PC-9 (cell line): ENCODE measurements at regions of chr3 and their contacts with region 1.

Region 1: GRCh38 chr3:105402287-105402801 is 35.6 kb downstream of the ALCAM start:
- DNase-seq: peak; percentile 93 to 98
- H3K4me3 ChIP-seq: peak overlapping the region; percentile 40; the same call in 1 of the 2 replicates
- H3K27ac ChIP-seq: peak overlapping the region; percentile 91
- H3K4me1 ChIP-seq: peaks cover 30% of the 10 kb centered on the region
- H3K27me3 ChIP-seq: no peaks in the 10 kb centered on the region
- CTCF ChIP-seq: no peak

Region 2: GRCh38 chr3:105274958-105275357 is 127.4 kb before region 1 on chr3:
- CTCF ChIA-PET with region 1: no interaction called
- POLR2A ChIA-PET with region 1: no interaction called
- intact Hi-C with region 1: loop called (anchors 1 kb)
- DNase-seq: peak; percentile 40 to 78
- H3K4me3 ChIP-seq: no peak overlapping the region
- H3K27ac ChIP-seq: peak overlapping the region; percentile 52
- H3K4me1 ChIP-seq: peaks cover 22% of the 10 kb centered on the region
- H3K27me3 ChIP-seq: no peaks in the 10 kb centered on the region
- CTCF ChIP-seq: no peak

Region 3: DNA sequence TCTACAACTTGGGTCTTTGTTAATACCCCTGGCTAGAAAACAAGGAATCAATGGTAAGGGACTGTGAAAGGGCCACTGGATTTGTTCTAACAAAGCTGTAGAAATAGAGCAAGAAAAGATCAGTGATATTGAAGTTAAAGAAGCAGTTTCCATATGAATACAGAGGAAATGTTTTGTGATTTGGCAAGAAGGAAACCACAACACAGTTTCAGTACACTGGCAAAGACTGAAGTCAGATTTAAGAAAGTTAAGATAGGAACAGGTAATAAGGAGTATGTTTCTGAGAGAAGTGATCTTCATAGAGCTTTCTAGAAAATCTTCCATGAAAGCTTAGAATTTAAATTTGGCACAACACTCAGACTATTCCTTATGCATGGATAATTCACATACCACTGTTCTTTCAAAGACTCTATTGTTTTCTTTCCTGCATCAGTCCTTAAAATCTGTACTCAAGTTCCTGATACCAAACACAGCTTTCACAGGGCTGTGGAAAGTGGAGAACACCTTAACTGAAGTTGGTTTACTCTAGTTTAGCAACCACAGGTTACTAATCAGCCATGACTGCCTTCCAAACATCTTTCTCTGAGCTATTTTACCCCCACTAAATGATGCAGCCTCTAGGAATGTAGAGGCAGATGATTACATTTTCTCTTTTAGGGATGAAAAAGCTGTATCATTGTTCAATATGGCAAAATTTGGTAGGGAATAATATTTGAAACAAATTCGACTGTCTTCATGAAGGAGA is 68.0 kb before region 1 on chr3:
- CTCF ChIA-PET with region 1: interaction called, 17 read pairs
- POLR2A ChIA-PET with region 1: no interaction called
- intact Hi-C with region 1: no loop called
- DNase-seq: no peak
- H3K4me3 ChIP-seq: no peak overlapping the region
- H3K27ac ChIP-seq: no peak overlapping the region
- H3K4me1 ChIP-seq: no peaks in the 10 kb centered on the region
- H3K27me3 ChIP-seq: no peaks in the 10 kb centered on the region
- CTCF ChIP-seq: no peak

Region 4: GRCh38 chr3:105431200-105431599 is 28.9 kb after region 1 on chr3:
- CTCF ChIA-PET with region 1: no interaction called
- POLR2A ChIA-PET with region 1: interaction called, 11 read pairs
- intact Hi-C with region 1: no loop called
- DNase-seq: no peak
- H3K4me3 ChIP-seq: no peak overlapping the region
- H3K27ac ChIP-seq: no peak overlapping the region
- H3K4me1 ChIP-seq: no peaks in the 10 kb centered on the region
- H3K27me3 ChIP-seq: no peaks in the 10 kb centered on the region
- CTCF ChIP-seq: no peak

Region 5: DNA sequence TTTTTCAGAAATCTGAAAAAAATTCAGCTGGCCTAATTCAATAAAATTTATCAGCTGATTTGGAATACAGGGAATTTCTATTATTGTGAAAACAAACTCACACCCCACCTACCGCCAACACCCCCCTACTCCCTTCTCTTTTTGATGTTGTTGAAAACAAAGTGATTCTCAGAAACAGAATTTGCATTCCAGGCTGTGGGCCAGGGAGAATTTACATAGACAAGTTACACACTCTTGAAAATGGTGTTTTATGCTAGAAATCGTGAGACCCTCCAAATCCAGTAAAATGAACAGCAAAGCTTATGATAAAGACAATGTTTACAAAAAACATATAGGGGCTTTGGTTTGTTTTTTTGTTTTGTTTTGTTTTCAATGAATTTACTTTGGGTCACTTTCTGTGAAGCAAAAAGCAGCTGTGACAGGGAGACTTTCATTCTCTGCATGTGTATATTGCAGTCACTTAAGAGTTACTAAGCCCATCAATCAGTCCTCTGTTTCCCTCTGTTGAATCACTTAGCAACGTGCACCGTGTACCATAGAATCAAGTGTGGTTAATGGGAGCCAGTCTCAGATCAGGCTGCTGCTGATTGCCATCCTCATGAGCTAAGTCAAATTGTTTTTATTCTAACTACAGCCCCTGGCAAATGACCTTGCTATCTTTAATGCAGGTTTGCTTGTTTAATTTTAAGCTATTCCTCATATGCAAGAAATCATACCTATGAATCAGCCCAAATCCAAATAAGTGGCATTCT is 124.2 kb after region 1 on chr3:
- CTCF ChIA-PET with region 1: no interaction called
- POLR2A ChIA-PET with region 1: no interaction called
- intact Hi-C with region 1: no loop called
- DNase-seq: no peak
- H3K4me3 ChIP-seq: no peak overlapping the region
- H3K27ac ChIP-seq: no peak overlapping the region
- H3K4me1 ChIP-seq: peaks cover 44% of the 10 kb centered on the region
- H3K27me3 ChIP-seq: no peaks in the 10 kb centered on the region
- CTCF ChIP-seq: no peak

Region 6: DNA sequence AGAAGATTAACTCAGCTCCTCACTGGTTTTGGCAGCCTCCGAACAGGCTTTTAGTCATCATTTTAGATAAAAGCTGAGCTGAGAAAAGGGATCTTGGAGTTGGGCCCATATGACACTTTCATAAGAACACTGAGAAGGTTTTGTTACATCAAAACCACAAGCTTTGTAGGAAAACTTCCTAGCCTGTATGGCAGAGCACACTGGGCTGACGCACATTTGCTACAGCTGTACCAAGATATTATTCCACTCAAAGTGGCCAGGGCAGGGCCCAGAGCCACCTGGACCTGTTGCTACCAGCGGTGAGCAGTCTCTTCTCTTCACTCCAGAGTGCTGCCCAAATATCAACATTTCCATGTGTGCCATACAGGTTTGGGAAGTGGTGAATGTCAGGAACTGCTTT is 1814.4 kb after region 1 on chr3:
- CTCF ChIA-PET with region 1: no interaction called
- POLR2A ChIA-PET with region 1: no interaction called
- intact Hi-C with region 1: loop called (anchors 5 kb)
- DNase-seq: peak in 1 of 2 experiments; percentile 57
- H3K4me3 ChIP-seq: peak overlapping the region; percentile 6; the same call in 1 of the 2 replicates
- H3K27ac ChIP-seq: peak overlapping the region; percentile 87
- H3K4me1 ChIP-seq: peaks cover 46% of the 10 kb centered on the region
- H3K27me3 ChIP-seq: no peaks in the 10 kb centered on the region
- CTCF ChIP-seq: 0 out of 2 replicates have a peak, but pooled peaks have one; percentile 18